ENCODE measurements at regions of chr1 and their contacts with region 1.

Region 1: GRCh38 chr1:84668185-84668584 is 22.1 kb downstream of the SSX2IP start:
- DNase-seq: no peak
- H3K4me3 Mint-ChIP-seq: no peak overlapping the region
- H3K27ac Mint-ChIP-seq: no peak overlapping the region
- H3K4me1 Mint-ChIP-seq: peaks cover 9% of the 10 kb centered on the region
- H3K27me3 Mint-ChIP-seq: no peaks in the 10 kb centered on the region

Region 2: GRCh38 chr1:84721152-84721551 is 53.0 kb after region 1 on chr1:
- intact Hi-C with region 1: loop called (anchors 2 kb)
- DNase-seq: no peak
- H3K4me3 Mint-ChIP-seq: no peak overlapping the region
- H3K27ac Mint-ChIP-seq: no peak overlapping the region
- H3K4me1 Mint-ChIP-seq: peaks cover 18% of the 10 kb centered on the region
- H3K27me3 Mint-ChIP-seq: no peaks in the 10 kb centered on the region

Region 3: GRCh38 chr1:84735483-84735882 is 67.3 kb after region 1 on chr1:
- intact Hi-C with region 1: no loop called
- DNase-seq: no peak
- H3K4me3 Mint-ChIP-seq: no peak overlapping the region
- H3K27ac Mint-ChIP-seq: no peak overlapping the region
- H3K4me1 Mint-ChIP-seq: no peaks in the 10 kb centered on the region
- H3K27me3 Mint-ChIP-seq: peaks cover 25% of the 10 kb centered on the region